ENCODE measurements at regions of chr12 and their contacts with region 1.

Region 1: GRCh38 chr12:6614513-6615172 is 7.5 kb upstream of the CHD4 start:
- DNase-seq: no peak
- H3K4me3 ChIP-seq: no peak overlapping the region
- H3K27ac ChIP-seq: peak overlapping the region; percentile 70 to 91 (median 82)
- H3K4me1 ChIP-seq: peaks cover 18 to 75% (median 41%) of the 10 kb centered on the region in 6 donors
- H3K27me3 ChIP-seq: no peaks in the 10 kb centered on the region
- CTCF ChIP-seq: no peak
- POLR2A ChIP-seq: no peak

Region 2: GRCh38 chr12:6676962-6677361 is 62.3 kb after region 1 on chr12:
- intact Hi-C with region 1: no loop called
- DNase-seq: no peak
- H3K4me3 ChIP-seq: no peak overlapping the region
- H3K27ac ChIP-seq: no peak overlapping the region
- H3K4me1 ChIP-seq: peaks cover 0 to 31% (median 5%) of the 10 kb centered on the region in 6 donors
- H3K27me3 ChIP-seq: no peaks in the 10 kb centered on the region
- CTCF ChIP-seq: no peak
- POLR2A ChIP-seq: no peak

Region 3: DNA sequence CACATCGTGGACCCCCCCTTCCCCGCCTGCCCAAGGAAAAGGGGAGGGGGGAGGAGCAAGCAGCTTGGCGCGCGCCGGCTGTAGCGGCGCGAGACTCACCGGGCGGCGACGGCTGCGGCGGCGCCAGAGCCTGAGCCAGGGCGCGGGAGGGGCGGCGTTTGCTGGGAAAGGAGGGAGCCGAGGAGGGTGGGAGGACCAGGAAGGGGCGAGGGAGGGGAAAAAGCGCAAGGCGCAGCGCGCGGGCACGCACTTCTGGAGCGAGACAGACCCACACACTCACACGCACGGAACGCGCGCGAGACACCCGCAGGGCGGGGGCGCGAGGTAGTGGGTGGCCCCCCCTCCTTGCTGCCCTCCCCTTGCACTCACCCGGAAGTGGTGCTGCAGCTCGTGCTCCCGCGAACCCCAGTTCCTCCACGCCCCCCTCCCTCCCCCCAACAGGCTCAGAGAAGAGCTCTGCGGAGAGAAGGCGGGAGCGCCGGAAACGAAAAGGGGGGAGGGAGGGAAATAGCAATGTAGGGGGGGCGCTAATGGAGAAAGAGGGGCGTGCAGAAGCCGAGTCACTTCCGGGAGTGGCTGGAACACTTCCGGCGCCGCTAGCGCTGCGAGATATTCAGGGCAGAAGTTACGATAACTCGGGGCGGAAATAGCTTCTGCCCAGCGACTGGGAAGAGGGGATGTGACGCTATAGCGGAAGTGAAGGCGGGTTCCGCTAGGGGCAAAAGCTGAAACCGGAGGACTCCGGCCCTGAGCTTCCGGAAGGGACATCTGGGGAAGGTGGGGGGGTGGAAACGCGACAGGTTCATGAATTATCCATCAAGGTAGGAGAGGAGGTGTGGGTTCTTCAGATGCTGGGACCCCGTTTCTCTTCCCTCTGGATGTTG is 74.6 kb after region 1 on chr12 and contains the start of gene ZNF384:
- intact Hi-C with region 1: loop called (anchors 5 kb)
- DNase-seq: peak; percentile 98
- H3K4me3 ChIP-seq: peak within 1 kb of the TSS; percentile 71 to 90 (median 87)
- H3K27ac ChIP-seq: peak within 1 kb of the TSS; percentile 94 to 99 (median 96)
- H3K4me1 ChIP-seq: peaks cover 34 to 71% (median 59%) of the 10 kb centered on the region in 6 donors
- H3K27me3 ChIP-seq: no peaks in the 10 kb centered on the region
- CTCF ChIP-seq: peak in 8 of 11 experiments; percentile 30 to 77 (median 53)
- POLR2A ChIP-seq: peak in 2 of 3 donors; percentile 35 to 53
- total RNA-seq, gene ZNF384: 48.8 to 79.8 (median 59.0) TPM

Region 4: DNA sequence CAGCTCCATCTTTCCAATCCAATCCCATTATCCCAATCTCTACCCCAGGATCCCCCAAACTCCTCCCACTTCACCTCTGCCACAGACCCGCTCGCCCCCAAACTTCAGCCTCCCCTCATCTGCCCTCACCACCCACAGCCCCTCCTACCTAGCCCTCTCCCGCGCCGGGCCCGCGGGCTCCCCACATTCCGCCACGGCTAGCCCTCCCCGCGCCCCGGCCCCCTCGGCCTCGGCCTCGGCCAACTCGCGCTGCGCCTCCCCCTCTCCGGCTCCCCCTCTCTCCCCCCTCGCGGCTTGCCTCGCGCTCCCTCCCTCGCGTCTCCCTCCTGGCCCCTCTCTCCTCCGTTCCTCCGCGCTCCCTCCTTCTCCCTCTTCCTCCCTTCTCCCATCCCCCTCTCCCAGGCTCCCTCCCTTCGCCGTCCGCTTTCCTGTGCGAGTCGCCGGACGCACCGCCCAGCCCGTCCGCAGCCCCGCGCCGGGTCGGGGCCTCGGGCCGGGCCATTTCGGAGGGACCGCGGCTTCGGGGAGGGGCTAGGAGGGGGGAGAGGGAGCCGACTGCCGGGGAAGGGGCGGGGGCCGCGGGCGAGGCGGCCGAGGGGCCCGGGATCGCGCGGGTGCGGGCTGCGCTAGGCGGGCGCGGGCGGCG is 312.9 kb after region 1 on chr12 and contains the start of gene ATN1:
- intact Hi-C with region 1: no loop called
- DNase-seq: peak; percentile 90
- H3K4me3 ChIP-seq: peak within 1 kb of the TSS; percentile 47 to 85 (median 58)
- H3K27ac ChIP-seq: peak within 1 kb of the TSS; percentile 77 to 96 (median 90)
- H3K4me1 ChIP-seq: peaks cover 25 to 94% (median 78%) of the 10 kb centered on the region in 6 donors
- H3K27me3 ChIP-seq: peaks cover 0 to 18% (median 0%) of the 10 kb centered on the region in 7 donors
- CTCF ChIP-seq: no peak
- POLR2A ChIP-seq: no peak
- total RNA-seq, gene ATN1: 64.7 to 112 (median 81.7) TPM

Measured in spleen (tissue), 13 donors.